Endothelial cell of umbilical vein (primary cell): ENCODE measurements at regions of chr3 and their contacts with region 1.

Region 1: DNA sequence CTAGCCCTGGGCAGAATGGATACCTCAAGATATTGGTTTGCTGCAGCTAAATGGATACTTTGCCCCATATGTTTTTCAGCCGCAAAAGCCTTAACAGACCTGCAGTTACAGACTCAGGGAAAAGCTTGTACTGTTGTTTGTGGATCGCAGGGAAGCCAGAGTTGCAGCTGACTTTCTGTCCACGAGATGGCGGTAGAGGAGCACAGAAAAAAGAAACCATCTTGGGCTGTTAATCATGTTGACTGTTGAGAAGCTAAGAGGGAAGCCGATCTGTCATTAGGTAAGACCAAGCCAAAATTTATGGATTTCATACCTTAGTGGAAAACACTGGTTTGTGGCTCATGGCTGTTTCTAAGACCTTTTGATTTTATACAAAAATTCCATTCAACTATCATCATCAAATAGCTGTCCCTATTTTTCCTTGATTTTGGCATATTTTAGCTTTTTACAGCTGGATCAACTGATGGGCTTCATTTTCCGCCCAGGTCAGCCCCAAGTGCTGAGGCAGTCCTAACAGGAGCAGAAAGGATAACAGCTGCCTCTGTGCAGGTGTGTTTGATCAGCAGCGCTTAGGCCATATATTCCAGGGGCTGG is 205.7 kb upstream of the ZPLD1 start:
- DNase-seq: peak; percentile 83
- H3K4me3 ChIP-seq: no peak overlapping the region
- H3K27ac ChIP-seq: no peak overlapping the region
- H3K4me1 ChIP-seq: no peaks in the 10 kb centered on the region
- H3K27me3 ChIP-seq: peaks cover 10 to 13% of the 10 kb centered on the region in 2 experiments
- CTCF ChIP-seq: peak; percentile 83 to 89
- POLR2A ChIP-seq: no peak

Region 2: DNA sequence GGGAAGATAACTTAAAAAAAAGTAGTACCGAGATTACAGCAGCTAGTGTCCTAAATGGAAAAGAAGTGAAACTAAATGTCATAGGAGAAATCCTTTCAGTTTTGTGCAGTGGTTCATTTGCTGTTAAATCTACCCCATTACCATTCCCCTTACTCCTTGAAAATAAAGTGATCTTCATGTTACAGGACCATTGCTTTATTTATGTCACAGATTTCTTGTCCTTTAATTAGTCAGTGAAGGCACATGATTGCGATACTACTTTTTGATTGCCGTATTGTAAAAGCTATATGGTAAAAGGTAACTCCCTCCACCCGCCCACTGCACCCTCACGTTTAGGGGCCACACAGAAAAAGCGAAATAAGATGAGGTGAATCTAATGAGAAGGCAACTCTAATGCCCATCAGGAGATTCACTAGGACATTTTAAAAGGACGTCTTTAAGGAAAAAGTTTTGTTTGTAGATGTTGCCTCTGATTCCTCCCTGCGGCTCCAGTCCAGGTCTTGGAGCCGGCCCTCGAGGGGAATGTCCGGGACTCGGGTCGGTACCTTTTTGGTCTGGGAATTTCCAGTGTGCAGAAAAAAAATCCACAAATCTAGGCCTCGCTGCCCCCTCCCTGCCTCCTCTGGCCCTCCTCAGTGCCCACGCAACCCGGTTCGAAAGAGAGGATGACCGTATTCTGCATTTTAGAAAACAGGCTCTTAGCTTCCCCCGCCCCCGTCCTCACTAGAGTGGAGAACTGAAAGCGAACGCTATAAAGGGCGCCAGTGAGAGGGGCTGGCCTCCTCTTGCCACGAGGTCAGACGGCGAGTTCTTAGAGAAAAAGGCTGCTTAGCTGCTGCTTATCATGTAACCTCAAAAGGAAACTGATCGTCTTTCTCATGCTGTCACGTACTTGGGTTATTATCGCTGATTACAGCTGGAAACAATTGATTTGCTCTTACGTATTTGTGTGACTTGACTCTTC is 401.7 kb before region 1 on chr3:
- CTCF ChIA-PET with region 1: interaction called, 33 read pairs
- POLR2A ChIA-PET with region 1: no interaction called
- dilution Hi-C with region 1: no loop called
- intact Hi-C with region 1: no loop called
- DNase-seq: peak; percentile 87
- H3K4me3 ChIP-seq: peak overlapping the region; percentile 56 to 70 (median 61)
- H3K27ac ChIP-seq: peak overlapping the region; percentile 82
- H3K4me1 ChIP-seq: peaks cover 12% of the 10 kb centered on the region
- H3K27me3 ChIP-seq: no peaks in the 10 kb centered on the region
- CTCF ChIP-seq: no peak
- POLR2A ChIP-seq: no peak

Region 3: GRCh38 chr3:101926594-101927105 is 302.5 kb before region 1 on chr3:
- CTCF ChIA-PET with region 1: interaction called, 11 read pairs
- POLR2A ChIA-PET with region 1: no interaction called
- dilution Hi-C with region 1: no loop called
- intact Hi-C with region 1: no loop called
- DNase-seq: peak; percentile 74
- H3K4me3 ChIP-seq: no peak overlapping the region
- H3K27ac ChIP-seq: peak overlapping the region; percentile 39
- H3K4me1 ChIP-seq: peaks cover 26% of the 10 kb centered on the region
- H3K27me3 ChIP-seq: no peaks in the 10 kb centered on the region
- CTCF ChIP-seq: no peak
- POLR2A ChIP-seq: no peak

Region 4: DNA sequence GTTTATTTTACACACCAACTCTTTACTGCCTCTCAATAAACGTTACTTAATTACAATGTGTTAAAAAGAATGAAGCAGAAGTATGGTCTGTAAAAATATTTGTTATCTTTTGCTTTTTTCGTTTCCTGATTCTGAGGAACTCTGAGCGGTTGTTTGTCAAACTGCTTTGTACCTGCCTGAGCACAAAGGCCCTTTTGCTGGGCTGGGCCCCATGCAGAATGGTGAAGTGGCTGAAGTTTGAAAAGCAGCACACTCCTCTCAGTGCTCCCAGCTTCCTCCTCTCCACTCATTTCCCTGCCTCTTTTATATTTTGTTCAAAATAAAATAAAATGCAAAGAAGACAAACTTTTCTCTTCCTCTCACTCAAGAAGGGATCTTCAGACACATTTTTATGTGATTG is 150.3 kb before region 1 on chr3:
- CTCF ChIA-PET with region 1: interaction called, 14 read pairs
- POLR2A ChIA-PET with region 1: no interaction called
- dilution Hi-C with region 1: no loop called
- intact Hi-C with region 1: loop called (anchors 5 kb)
- DNase-seq: peak; percentile 23
- H3K4me3 ChIP-seq: no peak overlapping the region
- H3K27ac ChIP-seq: no peak overlapping the region
- H3K4me1 ChIP-seq: peaks cover 27% of the 10 kb centered on the region
- H3K27me3 ChIP-seq: no peaks in the 10 kb centered on the region
- CTCF ChIP-seq: no peak
- POLR2A ChIP-seq: no peak

Region 5: DNA sequence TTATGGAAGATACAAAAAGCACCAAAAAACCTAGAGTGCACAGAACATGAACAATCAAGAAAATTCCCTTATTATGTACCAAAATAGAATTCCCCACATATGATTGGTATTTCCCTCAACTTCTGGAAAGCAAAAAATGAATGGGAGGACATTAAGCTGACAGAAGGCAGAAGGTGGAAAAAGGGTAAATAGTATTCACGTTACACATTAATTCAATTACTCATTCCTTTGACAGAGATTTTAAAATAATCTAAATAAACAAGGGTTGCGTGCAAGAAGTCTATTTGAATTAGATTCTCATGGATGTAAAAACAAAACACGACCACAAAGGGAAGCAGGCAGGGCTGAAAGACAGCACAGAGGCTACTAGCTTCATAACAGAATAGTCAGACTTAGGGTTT is 54.8 kb before region 1 on chr3:
- CTCF ChIA-PET with region 1: interaction called, 57 read pairs
- POLR2A ChIA-PET with region 1: no interaction called
- dilution Hi-C with region 1: no loop called
- intact Hi-C with region 1: no loop called
- DNase-seq: peak; percentile 87
- H3K4me3 ChIP-seq: no peak overlapping the region
- H3K27ac ChIP-seq: peak overlapping the region; percentile 91
- H3K4me1 ChIP-seq: peaks cover 56% of the 10 kb centered on the region
- H3K27me3 ChIP-seq: no peaks in the 10 kb centered on the region
- CTCF ChIP-seq: no peak
- POLR2A ChIP-seq: no peak

Region 6: GRCh38 chr3:102544741-102545140 is 315.6 kb after region 1 on chr3:
- CTCF ChIA-PET with region 1: interaction called, 304 read pairs
- POLR2A ChIA-PET with region 1: no interaction called
- dilution Hi-C with region 1: no loop called
- intact Hi-C with region 1: no loop called
- DNase-seq: no peak
- H3K4me3 ChIP-seq: no peak overlapping the region
- H3K27ac ChIP-seq: no peak overlapping the region
- H3K4me1 ChIP-seq: no peaks in the 10 kb centered on the region
- H3K27me3 ChIP-seq: peaks cover 0 to 13% of the 10 kb centered on the region in 2 experiments
- CTCF ChIP-seq: no peak
- POLR2A ChIP-seq: no peak